ENCODE measurements at regions of chr13 and their contacts with region 1.

Region 1: GRCh38 chr13:20077086-20077485 is 83.8 kb downstream of the GJA3 start:
- DNase-seq: no peak
- ATAC-seq: no peak
- H3K4me3 ChIP-seq: no peak overlapping the region
- H3K27ac ChIP-seq: no peak overlapping the region
- H3K4me1 ChIP-seq: no peaks in the 10 kb centered on the region
- H3K27me3 ChIP-seq: no peaks in the 10 kb centered on the region
- CTCF ChIP-seq: no peak

Region 2: DNA sequence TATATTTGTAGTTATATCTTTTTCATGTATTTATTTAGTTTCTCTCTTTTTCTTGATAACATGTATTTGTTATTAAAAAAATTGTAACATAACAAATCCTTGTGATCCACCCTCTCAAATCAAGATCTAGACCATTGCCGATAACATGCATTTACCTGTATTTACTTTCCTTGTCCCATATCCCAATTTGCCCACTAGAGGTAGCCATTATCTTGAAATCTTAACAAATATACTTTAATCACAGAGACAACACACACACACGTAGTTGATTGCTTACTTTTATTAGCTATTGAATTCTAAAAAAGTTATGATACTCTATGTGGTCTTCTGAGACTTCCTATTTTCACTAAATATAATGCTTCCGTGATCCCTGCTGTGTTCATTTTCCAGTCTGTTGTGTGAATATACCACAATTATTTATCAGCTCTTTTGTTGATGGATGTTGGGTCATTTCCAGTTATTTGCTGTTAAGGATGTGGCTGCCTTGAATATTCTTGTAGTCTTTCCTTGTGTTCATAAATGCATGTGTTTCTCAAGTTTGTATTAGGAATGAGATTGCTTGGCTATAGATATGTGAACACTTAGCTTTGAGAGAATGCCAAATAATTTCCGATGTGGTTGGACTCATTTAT is 149.9 kb before region 1 on chr13:
- CTCF ChIA-PET with region 1: no interaction called
- POLR2A ChIA-PET with region 1: no interaction called
- intact Hi-C with region 1: no loop called
- DNase-seq: peak; percentile 71
- ATAC-seq: peak; percentile 87
- H3K4me3 ChIP-seq: peak overlapping the region; percentile 15; the same call in 1 of the 2 replicates
- H3K27ac ChIP-seq: no peak overlapping the region
- H3K4me1 ChIP-seq: no peaks in the 10 kb centered on the region
- H3K27me3 ChIP-seq: no peaks in the 10 kb centered on the region
- CTCF ChIP-seq: peak; percentile 91

Region 3: GRCh38 chr13:19984430-19985218 is 92.5 kb before region 1 on chr13:
- CTCF ChIA-PET with region 1: no interaction called
- POLR2A ChIA-PET with region 1: interaction called, 15 read pairs
- intact Hi-C with region 1: no loop called
- DNase-seq: peak; percentile 55
- ATAC-seq: peak; percentile 57
- H3K4me3 ChIP-seq: no peak overlapping the region
- H3K27ac ChIP-seq: no peak overlapping the region
- H3K4me1 ChIP-seq: no peaks in the 10 kb centered on the region
- H3K27me3 ChIP-seq: no peaks in the 10 kb centered on the region
- CTCF ChIP-seq: peak; percentile 81

Region 4: DNA sequence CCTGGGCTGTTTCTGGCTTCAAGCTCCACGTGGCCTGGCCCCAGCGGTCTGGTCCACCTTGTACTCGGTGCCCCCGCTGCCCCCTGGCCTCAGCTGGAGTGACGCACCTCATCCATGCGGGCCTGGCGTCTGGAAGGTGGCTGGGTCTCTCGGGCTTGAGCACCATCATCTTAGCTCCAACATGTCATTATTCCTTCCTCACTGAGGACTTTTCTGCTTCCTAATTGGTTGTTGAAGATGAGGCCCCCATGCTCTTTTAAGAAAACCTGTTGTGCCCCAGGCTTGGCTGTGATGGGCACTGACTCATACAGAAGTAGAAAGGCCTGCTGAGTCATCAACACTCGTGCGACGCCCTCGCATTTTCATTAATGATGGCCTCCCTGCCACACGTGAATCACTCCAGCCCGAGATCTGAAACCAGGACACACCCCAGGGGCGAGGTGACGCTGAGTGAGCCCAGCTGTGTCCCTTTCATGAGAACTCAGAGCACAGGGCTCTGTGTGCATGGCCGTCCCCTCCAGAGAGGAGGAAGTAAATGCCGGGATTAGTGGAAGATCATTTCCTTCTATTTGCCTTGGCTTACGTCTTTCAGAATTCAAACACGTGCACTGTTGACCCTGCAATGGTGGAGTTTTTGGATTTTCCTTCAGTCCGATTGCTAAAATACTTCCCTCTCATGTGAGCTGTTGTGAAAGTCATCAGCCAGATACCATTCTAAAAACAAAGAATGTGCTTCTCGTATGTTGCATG is 97.7 kb after region 1 on chr13:
- CTCF ChIA-PET with region 1: no interaction called
- POLR2A ChIA-PET with region 1: no interaction called
- intact Hi-C with region 1: no loop called
- DNase-seq: peak; percentile 99
- ATAC-seq: peak; percentile 94
- H3K4me3 ChIP-seq: peak overlapping the region; percentile 22; the same call in 1 of the 2 replicates
- H3K27ac ChIP-seq: peak overlapping the region; percentile 72
- H3K4me1 ChIP-seq: peaks cover 30% of the 10 kb centered on the region
- H3K27me3 ChIP-seq: no peaks in the 10 kb centered on the region
- CTCF ChIP-seq: no peak

Region 5: GRCh38 chr13:20512042-20512683 is 435.1 kb after region 1 on chr13:
- CTCF ChIA-PET with region 1: no interaction called
- POLR2A ChIA-PET with region 1: no interaction called
- intact Hi-C with region 1: no loop called
- DNase-seq: no peak
- ATAC-seq: no peak
- H3K4me3 ChIP-seq: no peak overlapping the region
- H3K27ac ChIP-seq: no peak overlapping the region
- H3K4me1 ChIP-seq: no peaks in the 10 kb centered on the region
- H3K27me3 ChIP-seq: no peaks in the 10 kb centered on the region
- CTCF ChIP-seq: no peak

Region 6: DNA sequence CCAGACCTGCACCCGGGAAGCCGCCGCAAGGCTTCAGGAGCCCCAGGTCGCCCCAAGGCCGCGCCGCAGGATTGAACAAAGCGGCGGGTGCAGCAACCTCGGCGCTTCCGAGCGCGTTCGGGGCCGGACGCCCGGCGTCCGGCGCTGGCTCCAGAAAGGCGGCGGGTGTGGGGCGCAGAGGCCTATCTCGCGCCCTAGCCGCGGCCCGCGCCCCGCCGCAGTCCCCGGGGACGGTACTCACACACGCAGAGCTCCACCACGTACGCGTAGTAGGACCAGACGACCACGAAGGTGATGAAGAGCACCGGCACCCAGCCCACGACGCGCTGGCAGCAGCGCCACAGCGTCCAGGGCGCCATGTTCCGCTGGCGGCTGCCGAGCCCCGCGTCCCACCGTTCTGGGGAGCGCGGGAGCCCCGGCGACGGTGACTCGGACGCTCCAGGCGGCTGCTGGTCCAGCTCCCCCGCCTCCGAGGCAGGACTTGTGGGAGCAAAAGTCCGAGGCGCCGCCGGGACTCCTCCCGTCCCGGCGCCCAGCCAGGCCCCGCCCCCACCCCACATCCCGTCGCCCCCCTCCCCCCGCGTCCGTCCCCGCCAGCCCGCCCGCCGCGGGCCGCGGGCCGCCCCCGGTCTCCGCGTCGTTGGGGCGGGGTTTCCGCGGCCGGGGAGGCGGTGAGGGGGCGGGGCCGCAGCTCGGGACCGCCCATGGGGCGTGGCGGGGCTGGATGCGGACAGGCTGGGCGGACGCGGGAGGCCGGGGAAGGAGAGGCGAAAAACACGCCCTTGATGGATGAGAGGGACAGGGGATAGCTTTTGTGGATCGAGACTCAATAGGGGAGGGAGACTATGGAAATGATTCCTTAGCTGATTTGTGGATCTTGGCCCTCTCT is 1382.0 kb after region 1 on chr13 and contains the start of gene ZDHHC20:
- CTCF ChIA-PET with region 1: no interaction called
- POLR2A ChIA-PET with region 1: no interaction called
- intact Hi-C with region 1: no loop called
- DNase-seq: peak; percentile 83
- ATAC-seq: peak; percentile 83
- H3K4me3 ChIP-seq: peak within 1 kb of the TSS; percentile 99
- H3K27ac ChIP-seq: peak within 1 kb of the TSS; percentile 52
- H3K4me1 ChIP-seq: peaks cover 11% of the 10 kb centered on the region; the same call in 1 of the 2 replicates
- H3K27me3 ChIP-seq: no peaks in the 10 kb centered on the region
- CTCF ChIP-seq: no peak
- total RNA-seq, gene ZDHHC20: 46.4 and 53.7 TPM in 2 replicates